Activated naive CD8-positive, alpha-beta T cell treated with anti-CD3 and anti-CD28 coated beads, Interleukin-2, amount 10 ng/mL, durations not matched to agents 7 days and 5 days (primary cell): ENCODE measurements at regions of chr1 and their contacts with region 1.

Region 1: DNA sequence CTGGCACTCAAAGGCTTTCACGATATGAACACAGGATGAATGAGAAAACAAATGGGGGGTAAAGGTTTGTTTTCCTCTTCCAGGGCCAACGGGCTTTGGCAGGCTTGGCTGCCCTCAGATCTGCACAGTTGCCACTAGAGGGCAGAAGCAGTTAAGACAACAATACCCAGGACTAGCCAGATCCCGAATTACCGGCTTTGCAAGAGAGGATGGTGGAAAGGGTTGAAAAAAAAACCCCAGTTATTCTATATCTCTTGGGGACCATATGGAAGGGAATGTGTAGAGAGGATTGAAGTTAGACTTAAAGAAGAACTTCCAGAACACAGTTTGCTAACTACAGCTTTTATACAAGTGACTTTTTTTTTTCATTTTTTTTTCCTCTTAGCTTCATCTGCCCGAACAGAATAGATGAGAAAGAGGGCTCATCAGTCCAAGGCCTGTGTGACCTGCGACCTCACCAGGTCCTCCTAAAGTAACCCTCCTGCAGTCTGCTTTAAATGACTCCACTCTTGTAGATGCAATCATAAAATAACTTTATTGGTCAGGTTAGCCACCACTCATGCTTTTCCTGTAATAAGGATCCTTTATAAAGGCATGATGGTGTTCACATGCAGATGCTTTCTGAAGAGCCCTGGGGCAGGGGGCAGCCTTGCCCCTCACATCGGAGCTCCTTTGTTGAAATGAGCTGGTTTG is 10.7 kb downstream of the FMOD start:
- DNase-seq: no peak
- ATAC-seq: peak; percentile 73
- H3K4me3 Mint-ChIP-seq: no peak overlapping the region
- H3K27ac Mint-ChIP-seq: no peak overlapping the region
- H3K4me1 Mint-ChIP-seq: peaks cover 14% of the 10 kb centered on the region
- H3K27me3 Mint-ChIP-seq: peaks cover 26% of the 10 kb centered on the region

Region 2: GRCh38 chr1:203290261-203291089 is 49.8 kb before region 1 on chr1:
- POLR2A ChIA-PET with region 1: interaction called, 12 read pairs
- DNase-seq: peak; percentile 94
- ATAC-seq: peak; percentile 46
- H3K4me3 Mint-ChIP-seq: peak overlapping the region; percentile 82
- H3K27ac Mint-ChIP-seq: peak overlapping the region; percentile 98
- H3K4me1 Mint-ChIP-seq: peaks cover 60% of the 10 kb centered on the region
- H3K27me3 Mint-ChIP-seq: no peaks in the 10 kb centered on the region

Region 3: GRCh38 chr1:203326830-203327683 is 13.2 kb before region 1 on chr1:
- POLR2A ChIA-PET with region 1: interaction called, 13 read pairs
- DNase-seq: peak; percentile 95
- ATAC-seq: peak; percentile 86
- H3K4me3 Mint-ChIP-seq: peak overlapping the region; percentile 74
- H3K27ac Mint-ChIP-seq: peak overlapping the region; percentile 90
- H3K4me1 Mint-ChIP-seq: peaks cover 50% of the 10 kb centered on the region
- H3K27me3 Mint-ChIP-seq: peaks cover 3% of the 10 kb centered on the region

Region 4: GRCh38 chr1:203408486-203409427 is 68.5 kb after region 1 on chr1:
- POLR2A ChIA-PET with region 1: no interaction called
- DNase-seq: no peak
- ATAC-seq: no peak
- H3K4me3 Mint-ChIP-seq: no peak overlapping the region
- H3K27ac Mint-ChIP-seq: no peak overlapping the region
- H3K4me1 Mint-ChIP-seq: no peaks in the 10 kb centered on the region
- H3K27me3 Mint-ChIP-seq: peaks cover 28% of the 10 kb centered on the region